Right cardiac atrium (tissue), 5 donors: ENCODE measurements at regions of chr3 and their contacts with region 1.

Region 1: DNA sequence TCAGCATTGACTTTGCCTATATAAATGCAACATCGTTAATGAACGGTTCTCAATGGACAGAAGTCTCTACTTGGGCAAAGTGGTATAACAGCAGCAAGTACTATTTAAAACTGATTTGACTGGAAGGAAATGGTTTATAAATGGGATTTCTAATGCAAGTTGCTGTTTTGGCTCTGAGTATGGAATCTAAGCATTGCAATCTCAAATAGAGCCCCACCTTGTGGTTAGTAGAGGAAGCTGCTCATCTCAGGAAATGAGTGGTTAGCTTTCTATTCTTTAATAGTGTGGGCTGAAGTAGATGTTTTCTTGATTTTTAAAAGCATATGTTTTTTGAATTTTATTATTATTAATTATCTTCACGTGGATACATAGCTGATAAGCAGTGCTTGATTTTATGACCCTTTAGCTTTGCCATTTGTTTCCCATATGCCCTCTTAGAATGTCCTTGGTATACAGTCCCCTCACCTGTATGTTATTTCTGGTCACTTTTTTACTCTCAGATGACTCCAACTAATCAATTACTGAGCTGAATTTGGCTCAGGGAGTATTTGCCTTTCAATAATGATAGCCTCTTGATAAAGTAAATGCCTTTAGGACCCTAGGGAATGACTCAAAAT is 67.1 kb downstream of the OXSM start:
- DNase-seq: no peak
- ATAC-seq: peak in 1 of 2 donors; percentile 55
- H3K4me3 ChIP-seq: no peak overlapping the region
- H3K27ac ChIP-seq: no peak overlapping the region
- H3K4me1 ChIP-seq: no peaks in the 10 kb centered on the region
- H3K27me3 ChIP-seq: no peaks in the 10 kb centered on the region

Region 2: DNA sequence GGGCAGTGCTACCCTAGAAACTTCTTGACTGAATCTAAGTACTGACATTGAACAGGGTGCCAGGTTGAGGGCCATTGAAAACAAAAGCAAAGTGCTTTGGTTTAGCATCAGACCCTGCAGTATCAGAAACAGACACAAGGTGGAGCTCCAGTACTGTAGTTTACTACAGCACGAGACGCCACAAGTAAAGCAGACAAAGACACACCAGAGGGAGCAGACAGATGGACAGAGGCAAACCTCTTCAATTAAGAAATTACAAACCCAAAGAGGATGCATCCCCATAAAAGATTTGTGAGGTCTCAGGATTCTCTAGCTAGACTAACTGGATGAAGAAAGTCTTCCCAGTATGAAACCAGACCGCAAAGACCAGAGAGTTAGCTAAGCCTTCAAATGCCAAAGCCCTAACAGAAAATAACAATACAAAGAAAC is 208.9 kb before region 1 on chr3:
- intact Hi-C with region 1: loop called in 3 of 4 experiments (anchors 5 to 10 kb)
- DNase-seq: peak in 1 of 3 donors; percentile 36
- ATAC-seq: peak; percentile 74 to 86
- H3K4me3 ChIP-seq: no peak overlapping the region
- H3K27ac ChIP-seq: no peak overlapping the region
- H3K4me1 ChIP-seq: peaks cover 1% of the 10 kb centered on the region
- H3K27me3 ChIP-seq: no peaks in the 10 kb centered on the region

Region 3: DNA sequence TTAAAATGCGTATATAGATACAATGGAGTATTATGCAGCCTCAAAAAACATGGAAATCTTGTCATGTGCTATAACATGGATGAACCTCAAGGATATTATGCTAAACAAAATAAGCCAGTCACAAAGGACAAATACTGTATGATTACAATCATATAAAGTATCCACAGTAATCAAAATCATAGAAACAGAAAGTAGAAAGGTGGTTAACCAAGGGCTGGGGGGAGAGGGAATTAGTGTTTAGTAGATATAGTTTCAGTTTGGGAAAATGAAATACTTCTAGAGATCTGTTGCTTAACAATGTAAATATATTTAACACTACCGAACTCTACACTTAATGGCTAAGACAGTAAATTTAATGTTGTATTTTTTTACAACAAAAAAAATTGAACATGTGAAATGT is 201.4 kb before region 1 on chr3:
- intact Hi-C with region 1: loop called in 1 of 4 experiments (anchors 10 kb)
- DNase-seq: no peak
- ATAC-seq: no peak
- H3K4me3 ChIP-seq: no peak overlapping the region
- H3K27ac ChIP-seq: no peak overlapping the region
- H3K4me1 ChIP-seq: peaks cover 3% of the 10 kb centered on the region
- H3K27me3 ChIP-seq: no peaks in the 10 kb centered on the region

Region 4: DNA sequence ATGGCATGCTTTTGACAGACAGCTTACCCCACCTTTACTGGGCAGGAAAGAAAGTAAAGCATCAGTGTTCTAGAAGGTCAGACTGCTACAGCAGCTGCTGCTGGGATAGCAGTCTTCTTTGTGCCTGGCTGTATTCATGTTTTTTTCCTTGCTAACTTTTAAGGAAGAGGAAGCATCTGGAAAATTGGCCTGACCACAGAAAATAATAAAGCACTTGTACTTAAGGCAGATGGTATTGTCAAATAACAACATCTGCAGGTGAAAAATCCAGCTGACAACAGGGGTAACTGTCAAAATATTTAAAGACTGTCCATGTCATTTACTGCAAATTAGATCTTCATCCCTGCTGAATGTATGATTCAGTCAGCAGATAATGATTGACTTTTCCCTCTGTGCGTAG is 161.9 kb after region 1 on chr3:
- intact Hi-C with region 1: no loop called
- DNase-seq: no peak
- ATAC-seq: no peak
- H3K4me3 ChIP-seq: no peak overlapping the region
- H3K27ac ChIP-seq: no peak overlapping the region
- H3K4me1 ChIP-seq: no peaks in the 10 kb centered on the region
- H3K27me3 ChIP-seq: no peaks in the 10 kb centered on the region